Right lobe of liver (tissue), 6 donors: ENCODE measurements at regions of chr4 and their contacts with region 1.

Region 1: GRCh38 chr4:127732613-127733328 is 2.6 kb downstream of the SLC25A31 start:
- DNase-seq: no peak
- ATAC-seq: peak; percentile 64 to 88 (median 75)
- H3K4me3 ChIP-seq: no peak overlapping the region
- H3K27ac ChIP-seq: no peak overlapping the region
- H3K4me1 ChIP-seq: no peaks in the 10 kb centered on the region
- H3K27me3 ChIP-seq: no peaks in the 10 kb centered on the region
- CTCF ChIP-seq: peak; percentile 57 to 64 (median 62)
- POLR2A ChIP-seq: no peak

Region 2: DNA sequence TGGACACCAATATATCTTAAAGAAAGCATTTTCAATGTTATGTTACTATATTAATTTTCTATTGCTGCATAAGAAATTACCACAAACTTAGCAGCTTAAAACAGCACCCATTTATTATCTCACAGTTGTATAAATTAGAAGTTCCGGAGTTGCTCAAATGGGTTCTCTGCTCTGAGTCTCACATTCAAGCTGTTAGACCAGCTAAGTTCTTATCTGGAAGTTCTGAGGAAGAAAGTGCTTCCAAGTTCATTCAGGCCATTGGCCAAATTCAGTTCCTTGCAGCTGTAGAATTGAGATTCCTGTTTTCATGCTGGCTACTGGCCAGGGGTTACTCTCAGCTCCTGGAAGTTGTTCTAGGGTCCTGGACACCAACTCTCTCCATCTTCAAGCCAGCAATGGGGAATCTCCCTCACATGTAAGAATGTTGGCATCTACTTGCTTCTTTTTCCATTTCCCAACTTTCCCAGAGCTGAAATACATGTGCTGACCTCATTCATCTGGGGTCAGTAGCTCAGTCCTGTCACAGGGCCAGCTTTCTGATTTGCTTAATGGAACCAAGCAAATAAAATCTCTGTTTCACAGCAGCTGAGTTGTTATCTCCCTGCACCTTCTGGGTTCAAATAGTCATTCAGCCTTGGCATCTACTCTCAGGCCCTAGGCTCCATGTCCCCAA is 199.6 kb before region 1 on chr4:
- intact Hi-C with region 1: no loop called
- DNase-seq: peak; percentile 61 to 80 (median 68)
- ATAC-seq: peak; percentile 95 to 100 (median 98)
- H3K4me3 ChIP-seq: no peak overlapping the region
- H3K27ac ChIP-seq: no peak overlapping the region
- H3K4me1 ChIP-seq: no peaks in the 10 kb centered on the region
- H3K27me3 ChIP-seq: no peaks in the 10 kb centered on the region
- CTCF ChIP-seq: no peak
- POLR2A ChIP-seq: no peak

Region 3: GRCh38 chr4:127604949-127605709 is 127.6 kb before region 1 on chr4:
- intact Hi-C with region 1: loop called in 1 of 2 experiments (anchors 5 kb)
- DNase-seq: no peak
- ATAC-seq: peak in 3 of 4 donors; percentile 45 to 62 (median 50)
- H3K4me3 ChIP-seq: no peak overlapping the region
- H3K27ac ChIP-seq: no peak overlapping the region
- H3K4me1 ChIP-seq: no peaks in the 10 kb centered on the region
- H3K27me3 ChIP-seq: peaks cover 0 to 3% of the 10 kb centered on the region in 2 donors
- CTCF ChIP-seq: peak; percentile 47 to 60 (median 58)
- POLR2A ChIP-seq: no peak

Region 4: GRCh38 chr4:127622921-127623656 is 109.7 kb before region 1 on chr4:
- intact Hi-C with region 1: loop called in 1 of 2 experiments (anchors 10 kb)
- DNase-seq: peak in 2 of 3 donors; percentile 35 to 57
- ATAC-seq: peak; percentile 77 to 81 (median 80)
- H3K4me3 ChIP-seq: peak overlapping the region; percentile 26 to 43 (median 33)
- H3K27ac ChIP-seq: no peak overlapping the region
- H3K4me1 ChIP-seq: peaks cover 0 to 13% (median 4%) of the 10 kb centered on the region in 4 donors
- H3K27me3 ChIP-seq: peaks cover 0 to 9% of the 10 kb centered on the region in 2 donors
- CTCF ChIP-seq: no peak
- POLR2A ChIP-seq: no peak